ENCODE measurements at regions of chr6 and their contacts with region 1.

Region 1: GRCh38 chr6:3281631-3282475 is 23.1 kb downstream of the PSMG4 start:
- DNase-seq: peak; percentile 63 to 64
- H3K4me3 ChIP-seq: no peak overlapping the region
- H3K27ac ChIP-seq: peak overlapping the region; percentile 49 to 51
- H3K4me1 ChIP-seq: peaks cover 3 to 4% of the 10 kb centered on the region in 2 donors
- H3K27me3 ChIP-seq: no peaks in the 10 kb centered on the region
- CTCF ChIP-seq: no peak
- POLR2A ChIP-seq: no peak

Region 2: DNA sequence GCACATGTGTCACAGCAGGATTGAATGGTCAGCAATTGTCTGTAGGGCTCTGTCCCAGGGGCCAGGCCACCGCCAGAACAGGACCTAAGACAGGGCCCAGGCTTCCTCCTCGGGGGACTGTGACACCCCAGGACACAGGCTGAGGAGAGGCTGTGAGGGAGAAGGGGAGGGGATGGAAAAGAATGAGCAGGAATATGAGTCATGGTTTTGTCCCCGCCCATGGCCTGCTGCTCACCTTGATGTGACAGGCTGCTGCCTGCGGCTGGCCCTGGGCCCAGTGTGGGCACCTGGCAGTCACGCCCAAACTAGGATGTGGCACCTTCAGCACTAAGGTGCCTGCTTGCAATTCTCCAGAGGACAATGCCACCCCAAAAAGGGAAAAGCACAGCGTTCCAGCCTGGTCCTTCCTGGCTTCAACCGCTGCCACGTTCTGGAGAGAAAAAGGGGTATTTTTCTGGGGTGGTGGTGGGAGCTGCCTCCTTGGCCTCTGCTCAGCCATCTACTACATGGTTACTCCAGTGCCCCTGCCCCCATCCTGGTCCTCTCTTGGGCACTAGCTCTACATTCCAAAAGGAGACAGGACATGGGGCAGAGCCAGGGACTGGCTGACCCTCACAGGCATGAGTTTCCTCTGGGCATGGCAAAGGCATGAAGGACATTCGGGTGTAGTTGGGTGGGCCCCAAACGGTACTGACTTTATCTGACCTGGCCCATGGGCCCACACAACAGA is 81.6 kb after region 1 on chr6:
- intact Hi-C with region 1: no loop called
- DNase-seq: no peak
- H3K4me3 ChIP-seq: no peak overlapping the region
- H3K27ac ChIP-seq: no peak overlapping the region
- H3K4me1 ChIP-seq: no peaks in the 10 kb centered on the region
- H3K27me3 ChIP-seq: no peaks in the 10 kb centered on the region
- CTCF ChIP-seq: no peak
- POLR2A ChIP-seq: no peak

Region 3: DNA sequence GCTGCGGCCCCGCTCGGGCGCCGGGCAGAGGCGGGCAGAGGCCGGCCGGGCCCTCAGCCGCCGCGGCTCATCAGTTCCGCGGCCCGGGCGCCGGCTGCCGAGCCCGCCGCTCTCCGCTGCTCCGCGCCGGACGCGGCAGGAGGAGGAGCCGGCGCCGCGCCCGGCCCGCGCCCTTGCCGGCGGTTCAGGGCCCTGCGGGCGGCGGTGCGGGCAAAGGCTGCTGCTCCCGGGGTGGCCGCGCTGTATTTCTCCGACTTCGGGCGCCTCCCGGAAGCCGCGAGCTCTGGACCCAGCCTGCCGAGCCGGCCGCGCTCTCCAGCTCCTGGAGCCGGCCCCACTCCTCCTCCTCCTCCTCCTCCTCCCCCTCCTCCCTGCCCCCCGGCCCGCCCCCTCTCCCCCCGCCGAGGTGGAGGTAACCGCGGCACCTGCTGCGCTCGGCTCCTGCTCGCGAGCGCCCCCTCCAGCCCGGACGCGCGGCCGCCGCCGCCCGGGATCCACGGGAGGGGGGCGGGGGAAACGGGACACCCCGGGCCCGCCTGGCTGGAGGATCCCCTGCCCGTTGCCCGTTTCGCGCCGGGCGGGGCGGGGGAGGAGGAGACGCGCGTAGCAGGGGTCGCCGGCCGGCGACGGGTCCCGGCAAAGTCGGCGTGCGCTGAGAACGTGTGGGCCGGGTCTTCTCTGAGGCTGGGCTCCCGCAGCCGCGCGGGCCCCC is 175.1 kb after region 1 on chr6 and contains the start of gene SLC22A23:
- intact Hi-C with region 1: loop called (anchors 10 kb)
- DNase-seq: peak; percentile 49 to 65
- H3K4me3 ChIP-seq: peak within 1 kb of the TSS; percentile 51 to 56
- H3K27ac ChIP-seq: peak within 1 kb of the TSS; percentile 17 to 75
- H3K4me1 ChIP-seq: peaks cover 0 to 17% of the 10 kb centered on the region in 2 donors
- H3K27me3 ChIP-seq: no peaks in the 10 kb centered on the region
- CTCF ChIP-seq: peak; percentile 46 to 92 (median 72)
- POLR2A ChIP-seq: peak in 1 of 2 donors; percentile 20
- total RNA-seq, gene SLC22A23: 5.4 to 27.6 (median 9.7) TPM

Region 4: DNA sequence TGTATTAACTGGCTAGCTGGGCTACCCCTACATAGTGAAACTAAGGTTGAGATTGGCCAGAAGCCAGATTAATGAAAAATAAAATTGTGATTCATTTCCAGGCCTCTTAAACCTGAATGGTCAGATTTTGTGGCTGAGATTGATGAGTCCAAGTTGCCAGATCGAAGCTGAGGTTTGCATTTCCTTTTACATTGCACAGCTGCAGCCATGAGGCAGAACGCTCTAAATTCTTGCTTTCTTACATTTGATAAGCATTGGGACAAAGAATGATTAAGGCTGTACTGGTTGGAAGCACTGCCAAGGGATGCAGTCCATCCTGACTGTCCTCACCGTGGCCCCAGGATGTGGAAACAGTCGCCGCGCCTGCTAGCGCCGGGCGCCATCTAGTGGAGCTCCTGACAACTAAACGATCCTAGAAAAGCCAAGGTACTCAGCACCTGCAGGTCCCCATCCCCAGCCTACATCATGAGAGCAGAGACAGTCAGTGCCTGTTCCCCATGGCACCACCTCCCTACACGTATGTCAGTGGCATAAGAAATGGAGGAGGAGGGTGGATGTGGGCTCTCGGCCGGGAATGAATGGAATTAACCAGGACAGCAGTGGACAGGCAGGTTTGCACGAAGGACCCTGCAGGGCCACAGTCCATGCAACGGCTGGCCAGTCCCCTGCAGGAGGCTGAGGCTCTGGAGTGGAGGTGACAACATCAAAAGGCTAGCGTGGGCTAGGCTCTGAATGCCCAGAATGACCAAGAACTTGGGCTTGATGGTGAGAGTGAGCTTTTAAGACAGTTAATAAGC is 450.7 kb after region 1 on chr6:
- intact Hi-C with region 1: loop called (anchors 5 kb)
- DNase-seq: peak; percentile 79
- H3K4me3 ChIP-seq: no peak overlapping the region
- H3K27ac ChIP-seq: no peak overlapping the region
- H3K4me1 ChIP-seq: no peaks in the 10 kb centered on the region
- H3K27me3 ChIP-seq: no peaks in the 10 kb centered on the region
- CTCF ChIP-seq: peak; percentile 78 to 90 (median 86)
- POLR2A ChIP-seq: no peak

Region 5: GRCh38 chr6:3990692-3991501 is 709.0 kb after region 1 on chr6:
- intact Hi-C with region 1: loop called (anchors 10 kb)
- DNase-seq: peak; percentile 88 to 91
- H3K4me3 ChIP-seq: peak overlapping the region; percentile 30 to 34
- H3K27ac ChIP-seq: peak overlapping the region; percentile 62 to 63
- H3K4me1 ChIP-seq: no peaks in the 10 kb centered on the region
- H3K27me3 ChIP-seq: no peaks in the 10 kb centered on the region
- CTCF ChIP-seq: peak; percentile 79 to 88 (median 84)
- POLR2A ChIP-seq: no peak

Measured in uterus (tissue), 4 donors.